CD4-positive, alpha-beta T cell (primary cell): ENCODE measurements at regions of chr20 and their contacts with region 1.

Region 1: GRCh38 chr20:49982346-49983122 is at the start of gene SNAI1:
- DNase-seq: peak; percentile 68 to 94 (median 82)
- ATAC-seq: peak; percentile 91
- H3K4me3 ChIP-seq: peak within 1 kb of the TSS; percentile 48
- H3K4me3 Mint-ChIP-seq: peak within 1 kb of the TSS; percentile 72
- H3K27ac ChIP-seq: no peak within 1 kb of the TSS
- H3K27ac Mint-ChIP-seq: peak within 1 kb of the TSS; percentile 74
- H3K4me1 ChIP-seq: peaks cover 24% of the 10 kb centered on the region
- H3K4me1 Mint-ChIP-seq: peaks cover 15% of the 10 kb centered on the region
- H3K27me3 ChIP-seq: no peaks in the 10 kb centered on the region
- H3K27me3 Mint-ChIP-seq: no peaks in the 10 kb centered on the region
- CTCF ChIP-seq: peak; percentile 28
- total RNA-seq, gene SNAI1: 1.7 to 2.5 TPM

Region 2: DNA sequence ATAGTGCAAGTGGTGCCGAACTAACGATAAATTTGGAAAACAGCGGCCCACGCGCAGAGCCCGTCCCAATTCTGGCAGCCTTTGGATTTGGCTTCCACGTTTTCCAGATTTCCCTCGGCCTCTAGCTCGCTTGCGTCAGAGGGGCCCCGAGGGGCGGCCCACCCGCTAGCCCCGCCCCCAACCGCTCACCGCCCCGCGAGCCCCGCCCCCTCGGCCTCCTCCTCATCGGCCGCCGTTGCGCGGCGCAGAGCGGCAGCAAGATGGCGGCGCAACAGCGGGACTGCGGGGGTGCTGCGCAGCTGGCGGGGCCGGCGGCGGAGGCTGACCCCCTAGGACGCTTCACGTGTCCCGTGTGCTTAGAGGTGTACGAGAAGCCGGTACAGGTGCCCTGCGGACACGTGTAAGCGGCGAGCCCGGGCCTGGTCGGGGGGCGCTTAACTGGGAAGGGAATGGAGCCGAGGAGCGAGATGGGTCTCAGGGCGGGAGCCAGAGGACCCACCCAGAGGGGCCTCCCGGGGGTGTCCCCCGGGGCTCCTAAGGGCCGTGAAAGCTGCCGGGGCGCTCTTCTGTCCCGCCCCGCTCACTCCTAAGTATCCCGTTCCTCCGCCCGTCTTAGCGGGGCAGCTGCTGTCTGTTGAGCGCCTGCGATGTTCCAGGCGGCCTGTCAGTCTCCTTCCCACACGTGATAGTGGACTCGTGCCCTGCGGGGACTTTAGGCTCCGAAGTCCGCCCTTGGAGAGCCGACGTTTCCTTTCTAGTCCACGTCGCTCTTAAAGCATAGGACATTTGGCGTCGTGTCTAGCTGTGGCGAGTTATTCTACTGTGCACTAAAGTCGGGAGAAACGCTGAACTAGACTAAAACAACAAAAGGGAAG is 46.1 kb before region 1 on chr20 and contains the start of gene RNF114:
- CTCF ChIA-PET with region 1: interaction called, 13 read pairs
- POLR2A ChIA-PET with region 1: interaction called, 7 read pairs
- intact Hi-C with region 1: loop called in 1 of 2 experiments (anchors 2 kb)
- DNase-seq: peak; percentile 84 to 97 (median 90)
- ATAC-seq: peak; percentile 96
- H3K4me3 ChIP-seq: peak within 1 kb of the TSS; percentile 97
- H3K4me3 Mint-ChIP-seq: peak within 1 kb of the TSS; percentile 93
- H3K27ac ChIP-seq: peak within 1 kb of the TSS; percentile 81 to 82
- H3K27ac Mint-ChIP-seq: peak within 1 kb of the TSS; percentile 90
- H3K4me1 ChIP-seq: peaks cover 42% of the 10 kb centered on the region
- H3K4me1 Mint-ChIP-seq: peaks cover 51% of the 10 kb centered on the region
- H3K27me3 ChIP-seq: no peaks in the 10 kb centered on the region
- H3K27me3 Mint-ChIP-seq: no peaks in the 10 kb centered on the region
- CTCF ChIP-seq: no peak
- total RNA-seq, gene RNF114: 129 to 132 TPM

Region 3: DNA sequence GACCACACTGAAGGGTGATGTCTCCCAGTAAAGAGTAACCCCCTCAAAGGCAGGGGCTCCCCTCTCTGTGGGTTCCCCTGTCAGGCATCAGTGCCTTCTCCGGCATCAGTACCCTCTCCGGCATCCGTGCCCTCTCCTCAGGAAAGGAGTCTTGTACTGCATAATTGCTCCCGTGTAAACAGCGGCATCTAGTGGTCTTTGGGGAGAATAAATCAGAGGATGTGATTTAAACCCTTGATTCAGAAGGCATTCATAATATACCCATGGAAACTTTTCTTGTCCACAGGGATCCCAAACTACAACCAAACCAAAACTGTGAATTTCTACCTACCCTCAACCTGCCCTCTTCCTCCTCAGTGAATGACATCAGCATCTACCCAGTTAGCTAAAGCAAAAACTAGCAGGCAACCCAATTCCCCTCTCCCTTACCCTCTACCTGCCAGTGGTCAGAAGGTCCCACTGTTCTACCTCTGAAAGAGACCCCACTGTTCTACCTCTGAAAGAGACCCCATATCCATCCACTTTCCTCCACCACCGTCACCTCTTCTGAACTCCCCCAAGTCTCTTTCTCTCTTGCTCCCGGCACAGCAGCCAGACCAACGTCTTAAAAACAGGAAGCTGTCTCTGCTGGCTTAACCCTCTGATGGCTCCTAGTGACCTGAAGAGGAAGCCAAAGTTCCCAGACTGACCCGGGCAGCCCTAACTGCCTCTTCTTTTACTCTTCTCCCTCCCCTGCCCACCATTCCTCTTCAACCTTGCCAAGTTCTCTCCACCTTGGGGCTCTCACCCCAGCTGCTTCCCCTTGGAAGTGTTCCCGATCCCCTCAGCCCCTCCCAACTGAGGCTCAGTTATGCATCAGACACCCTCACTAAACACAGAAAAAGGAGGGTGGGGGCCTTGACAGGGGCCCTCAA is 103.2 kb after region 1 on chr20:
- CTCF ChIA-PET with region 1: interaction called, 9 read pairs
- POLR2A ChIA-PET with region 1: interaction called, 4 read pairs
- intact Hi-C with region 1: loop called (anchors 1 to 5 kb)
- DNase-seq: peak in 12 of 14 experiments; percentile 5 to 76 (median 24)
- ATAC-seq: peak; percentile 82
- H3K4me3 ChIP-seq: peak overlapping the region; percentile 39
- H3K4me3 Mint-ChIP-seq: peak overlapping the region; percentile 74
- H3K27ac ChIP-seq: no peak overlapping the region
- H3K27ac Mint-ChIP-seq: peak overlapping the region; percentile 64
- H3K4me1 ChIP-seq: peaks cover 12% of the 10 kb centered on the region
- H3K4me1 Mint-ChIP-seq: peaks cover 41% of the 10 kb centered on the region
- H3K27me3 ChIP-seq: no peaks in the 10 kb centered on the region
- H3K27me3 Mint-ChIP-seq: no peaks in the 10 kb centered on the region
- CTCF ChIP-seq: peak; percentile 82

Region 4: DNA sequence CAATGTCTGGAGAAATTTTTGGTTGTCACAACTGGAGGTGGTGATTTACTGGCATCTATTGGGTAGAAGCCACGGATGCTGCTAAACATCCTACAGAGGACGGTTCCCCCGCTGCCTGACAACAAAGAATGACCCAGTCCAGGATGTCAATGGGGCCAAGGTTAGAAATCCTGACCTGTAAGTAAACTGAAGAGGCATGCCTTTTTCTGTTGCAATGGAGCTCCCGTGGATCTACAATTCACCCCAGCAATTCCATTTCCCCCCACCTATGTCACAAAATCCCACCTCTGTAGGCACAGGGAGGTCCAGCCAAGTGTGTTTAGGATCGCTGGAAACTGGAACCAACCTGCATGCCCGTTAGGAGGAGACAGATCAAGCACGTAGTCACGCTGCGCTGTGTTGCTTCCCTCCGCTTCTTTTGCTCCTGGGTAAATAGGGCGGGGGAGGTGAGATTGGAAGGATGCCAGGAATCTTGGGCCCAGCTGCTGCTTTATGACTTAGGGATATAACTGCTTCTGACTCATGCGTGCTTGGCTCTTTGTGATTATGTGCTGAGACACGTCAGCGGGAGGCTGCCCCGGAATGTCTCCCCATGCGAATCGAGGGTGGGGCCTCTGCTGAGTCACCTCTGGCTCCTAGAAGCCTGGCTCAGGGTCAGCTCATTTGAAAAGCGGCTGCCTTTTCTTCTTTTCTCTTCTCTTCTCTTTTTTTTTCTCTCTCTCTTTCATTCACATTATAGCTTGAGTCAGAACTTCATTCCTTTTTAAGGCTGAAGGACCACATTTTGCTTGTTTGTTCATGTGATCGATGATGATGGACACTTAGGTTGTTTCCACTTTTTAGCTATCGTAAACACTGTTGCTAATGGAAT is 183.4 kb after region 1 on chr20:
- CTCF ChIA-PET with region 1: interaction called, 7 read pairs
- POLR2A ChIA-PET with region 1: interaction called, 3 read pairs
- intact Hi-C with region 1: loop called (anchors 1 to 5 kb)
- DNase-seq: peak in 13 of 14 experiments; percentile 61 to 90 (median 75)
- ATAC-seq: peak; percentile 88
- H3K4me3 ChIP-seq: peak overlapping the region; percentile 24
- H3K4me3 Mint-ChIP-seq: peak overlapping the region; percentile 17
- H3K27ac ChIP-seq: no peak overlapping the region
- H3K27ac Mint-ChIP-seq: no peak overlapping the region
- H3K4me1 ChIP-seq: peaks cover 13% of the 10 kb centered on the region
- H3K4me1 Mint-ChIP-seq: peaks cover 16% of the 10 kb centered on the region
- H3K27me3 ChIP-seq: no peaks in the 10 kb centered on the region
- H3K27me3 Mint-ChIP-seq: peaks cover 11% of the 10 kb centered on the region
- CTCF ChIP-seq: no peak

Region 5: GRCh38 chr20:50460460-50461267 is 478.1 kb after region 1 on chr20:
- CTCF ChIA-PET with region 1: no interaction called
- POLR2A ChIA-PET with region 1: no interaction called
- intact Hi-C with region 1: loop called in 1 of 2 experiments (anchors 5 kb)
- DNase-seq: peak; percentile 70 to 85 (median 76)
- ATAC-seq: peak; percentile 91
- H3K4me3 ChIP-seq: no peak overlapping the region
- H3K4me3 Mint-ChIP-seq: no peak overlapping the region
- H3K27ac ChIP-seq: no peak overlapping the region
- H3K27ac Mint-ChIP-seq: no peak overlapping the region
- H3K4me1 ChIP-seq: peaks cover 7% of the 10 kb centered on the region
- H3K4me1 Mint-ChIP-seq: no peaks in the 10 kb centered on the region
- H3K27me3 ChIP-seq: peaks cover 0 to under 1% of the 10 kb centered on the region in 2 experiments
- H3K27me3 Mint-ChIP-seq: no peaks in the 10 kb centered on the region
- CTCF ChIP-seq: peak; percentile 75